Activated CD4-positive, alpha-beta T cell treated with anti-CD3 and anti-CD28 coated beads, Interleukin-2, amount 10 ng/mL, durations not matched to agents 24 days and 14 days (primary cell): ENCODE measurements at regions of chr2 and their contacts with region 1.

Region 1: GRCh38 chr2:61538200-61538919 is at the start of gene XPO1:
- DNase-seq: peak; percentile 99
- H3K4me3 Mint-ChIP-seq: peak within 1 kb of the TSS; percentile 95
- H3K27ac Mint-ChIP-seq: peak within 1 kb of the TSS; percentile 100
- H3K4me1 Mint-ChIP-seq: peaks cover 35% of the 10 kb centered on the region
- H3K27me3 Mint-ChIP-seq: peaks cover 6% of the 10 kb centered on the region
- total RNA-seq, gene XPO1: 230 TPM in 2 replicates

Region 2: GRCh38 chr2:61016808-61017555 is 521.4 kb before region 1 on chr2:
- intact Hi-C with region 1: loop called (anchors 1 kb)
- DNase-seq: peak; percentile 92
- H3K4me3 Mint-ChIP-seq: peak overlapping the region; percentile 99
- H3K27ac Mint-ChIP-seq: peak overlapping the region; percentile 99
- H3K4me1 Mint-ChIP-seq: peaks cover 32% of the 10 kb centered on the region
- H3K27me3 Mint-ChIP-seq: no peaks in the 10 kb centered on the region

Region 3: GRCh38 chr2:61426267-61426897 is 112.0 kb before region 1 on chr2:
- intact Hi-C with region 1: loop called (anchors 5 kb)
- DNase-seq: peak; percentile 89
- H3K4me3 Mint-ChIP-seq: no peak overlapping the region
- H3K27ac Mint-ChIP-seq: peak overlapping the region; percentile 69
- H3K4me1 Mint-ChIP-seq: peaks cover 40% of the 10 kb centered on the region
- H3K27me3 Mint-ChIP-seq: no peaks in the 10 kb centered on the region

Region 4: GRCh38 chr2:61549546-61549945 is 11.2 kb after region 1 on chr2:
- intact Hi-C with region 1: no loop called
- DNase-seq: no peak
- H3K4me3 Mint-ChIP-seq: no peak overlapping the region
- H3K27ac Mint-ChIP-seq: no peak overlapping the region
- H3K4me1 Mint-ChIP-seq: no peaks in the 10 kb centered on the region
- H3K27me3 Mint-ChIP-seq: peaks cover 6% of the 10 kb centered on the region

Region 5: DNA sequence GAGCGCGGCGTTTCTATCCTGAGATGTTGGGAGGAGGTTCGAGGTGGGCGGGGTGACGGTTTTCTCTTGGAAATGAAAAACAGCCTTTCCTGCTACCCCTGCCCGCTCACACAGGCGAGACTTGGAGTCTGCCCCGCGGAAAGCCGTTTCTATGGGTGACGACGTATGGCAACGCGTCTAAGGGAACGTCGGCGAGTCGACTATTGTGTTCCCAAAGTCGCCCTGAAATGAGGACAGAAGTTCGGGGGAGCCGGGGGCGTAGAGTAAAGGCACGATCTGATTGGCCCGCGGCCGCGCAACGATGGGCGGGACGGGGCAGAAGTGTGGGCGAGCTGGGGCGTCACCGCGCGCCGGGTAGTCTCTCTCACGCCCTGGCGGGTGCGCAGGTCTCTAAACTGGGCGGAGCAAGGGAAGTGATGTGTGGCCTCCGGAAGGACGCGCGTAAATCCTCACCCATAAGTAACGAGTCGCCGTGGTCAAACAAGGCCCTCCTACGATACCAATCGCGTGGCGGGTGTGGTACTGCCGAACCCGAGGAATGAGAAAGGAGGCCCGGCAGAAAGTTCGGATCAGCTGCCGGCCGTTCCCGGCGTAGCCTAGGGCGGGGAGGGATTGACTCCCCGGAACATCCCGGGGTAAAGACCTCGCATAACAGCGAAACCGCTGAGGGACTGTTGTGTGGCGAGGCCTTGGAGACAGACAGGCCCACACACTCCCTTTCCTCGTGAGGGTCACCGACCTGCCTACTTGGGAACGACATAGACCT is 225.9 kb after region 1 on chr2:
- intact Hi-C with region 1: loop called (anchors 1 kb)
- DNase-seq: peak; percentile 99
- H3K4me3 Mint-ChIP-seq: peak overlapping the region; percentile 95
- H3K27ac Mint-ChIP-seq: peak overlapping the region; percentile 97
- H3K4me1 Mint-ChIP-seq: peaks cover 12% of the 10 kb centered on the region
- H3K27me3 Mint-ChIP-seq: peaks cover 1% of the 10 kb centered on the region

Region 6: DNA sequence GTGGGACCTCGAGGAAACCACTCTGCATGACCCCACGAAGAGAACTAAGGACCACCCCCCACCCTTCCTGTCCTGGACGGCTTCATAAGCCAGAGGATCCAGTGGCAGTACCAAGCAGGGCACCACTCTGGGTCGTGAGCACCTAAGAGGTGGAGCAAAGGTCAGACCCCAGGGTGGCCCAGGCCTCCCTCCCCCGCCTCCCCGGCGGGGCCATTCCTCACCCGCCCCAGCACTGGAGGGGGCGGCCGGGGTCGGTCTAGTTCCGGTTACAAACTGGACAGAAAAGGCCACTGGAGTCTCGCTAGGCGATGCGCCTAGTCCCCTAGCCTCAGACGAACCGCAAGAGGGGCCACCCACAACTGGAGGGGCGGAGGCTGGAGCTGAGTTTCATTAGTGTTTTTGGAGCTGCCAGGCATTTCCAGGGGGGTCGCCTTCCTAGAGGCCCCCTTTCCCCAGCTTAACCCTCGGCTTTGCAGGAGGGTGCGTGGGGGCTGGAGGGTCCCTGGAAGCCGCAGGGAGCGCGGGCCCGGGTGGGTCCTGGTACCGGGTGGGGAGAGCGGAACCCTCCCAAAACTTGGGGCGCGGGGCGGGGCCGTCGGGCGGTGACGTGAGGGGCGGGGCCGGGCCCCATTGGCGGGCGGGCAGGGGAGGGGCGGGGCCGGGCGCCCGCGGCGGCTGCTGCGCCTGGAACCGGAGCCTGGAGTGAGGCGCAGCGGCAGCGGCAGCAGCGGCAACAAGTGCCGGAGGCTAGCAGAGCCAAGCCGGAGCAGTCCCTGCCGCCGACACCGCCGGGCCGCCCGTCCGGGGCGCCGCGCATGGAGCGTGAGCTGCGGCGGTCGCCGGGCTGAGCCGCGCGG is 657.3 kb after region 1 on chr2 and contains the start of gene B3GNT2:
- intact Hi-C with region 1: loop called (anchors 5 kb)
- DNase-seq: peak; percentile 94
- H3K4me3 Mint-ChIP-seq: peak within 1 kb of the TSS; percentile 89
- H3K27ac Mint-ChIP-seq: peak within 1 kb of the TSS; percentile 92
- H3K4me1 Mint-ChIP-seq: peaks cover 34% of the 10 kb centered on the region
- H3K27me3 Mint-ChIP-seq: peaks cover 5% of the 10 kb centered on the region
- total RNA-seq, gene B3GNT2: 30.4 and 30.9 TPM in 2 replicates